ENCODE measurements at regions of chr5 and their contacts with region 1.

Region 1: GRCh38 chr5:34929150-34929719 is at the start of gene DNAJC21:
- DNase-seq: peak; percentile 99
- H3K4me3 Mint-ChIP-seq: peak within 1 kb of the TSS; percentile 94
- H3K27ac Mint-ChIP-seq: peak within 1 kb of the TSS; percentile 94
- H3K4me1 Mint-ChIP-seq: peaks cover 37% of the 10 kb centered on the region
- H3K27me3 Mint-ChIP-seq: no peaks in the 10 kb centered on the region
- total RNA-seq, gene DNAJC21: 59.1 to 62.1 TPM

Region 2: DNA sequence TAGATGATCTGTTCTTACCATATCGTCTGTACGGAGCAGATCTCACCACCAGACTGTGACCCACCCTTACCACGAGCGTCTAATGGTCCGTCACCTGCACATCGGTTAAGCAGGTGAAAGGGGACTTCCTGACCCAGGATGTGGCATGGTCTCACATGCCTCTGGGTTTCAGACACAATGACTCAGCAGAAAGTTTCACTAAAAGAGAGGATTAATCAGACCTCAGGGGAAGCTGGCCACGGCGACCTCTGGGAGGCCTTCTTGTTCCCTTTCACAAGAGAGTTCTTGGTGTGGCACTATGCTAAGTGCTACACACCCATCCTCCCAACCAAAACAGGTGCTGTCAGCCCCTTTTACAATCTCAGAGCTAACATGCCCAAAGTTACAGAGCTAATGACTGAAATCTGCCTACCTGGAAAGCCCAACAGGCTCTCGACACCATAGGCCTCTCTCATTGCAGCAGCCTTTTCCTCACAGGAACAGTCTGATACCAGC is 1079.1 kb before region 1 on chr5:
- CTCF ChIA-PET with region 1: no interaction called
- intact Hi-C with region 1: loop called (anchors 10 kb)
- DNase-seq: peak; percentile 70
- H3K4me3 Mint-ChIP-seq: no peak overlapping the region
- H3K27ac Mint-ChIP-seq: peak overlapping the region; percentile 55
- H3K4me1 Mint-ChIP-seq: peaks cover 8% of the 10 kb centered on the region
- H3K27me3 Mint-ChIP-seq: no peaks in the 10 kb centered on the region

Region 3: GRCh38 chr5:34915139-34915855 is 13.9 kb before region 1 on chr5 and contains the starts of genes BRIX1 and RAD1:
- CTCF ChIA-PET with region 1: interaction called, 11 read pairs
- intact Hi-C with region 1: loop called (anchors 1 kb)
- DNase-seq: peak; percentile 97
- H3K4me3 Mint-ChIP-seq: no peak within 1 kb of the TSS
- H3K27ac Mint-ChIP-seq: peak within 1 kb of the TSS; percentile 52
- H3K4me1 Mint-ChIP-seq: peaks cover 32% of the 10 kb centered on the region
- H3K27me3 Mint-ChIP-seq: no peaks in the 10 kb centered on the region
- total RNA-seq, gene BRIX1: 66.5 to 69.0 TPM
- total RNA-seq, gene RAD1: 38.8 to 40.7 TPM

Region 4: DNA sequence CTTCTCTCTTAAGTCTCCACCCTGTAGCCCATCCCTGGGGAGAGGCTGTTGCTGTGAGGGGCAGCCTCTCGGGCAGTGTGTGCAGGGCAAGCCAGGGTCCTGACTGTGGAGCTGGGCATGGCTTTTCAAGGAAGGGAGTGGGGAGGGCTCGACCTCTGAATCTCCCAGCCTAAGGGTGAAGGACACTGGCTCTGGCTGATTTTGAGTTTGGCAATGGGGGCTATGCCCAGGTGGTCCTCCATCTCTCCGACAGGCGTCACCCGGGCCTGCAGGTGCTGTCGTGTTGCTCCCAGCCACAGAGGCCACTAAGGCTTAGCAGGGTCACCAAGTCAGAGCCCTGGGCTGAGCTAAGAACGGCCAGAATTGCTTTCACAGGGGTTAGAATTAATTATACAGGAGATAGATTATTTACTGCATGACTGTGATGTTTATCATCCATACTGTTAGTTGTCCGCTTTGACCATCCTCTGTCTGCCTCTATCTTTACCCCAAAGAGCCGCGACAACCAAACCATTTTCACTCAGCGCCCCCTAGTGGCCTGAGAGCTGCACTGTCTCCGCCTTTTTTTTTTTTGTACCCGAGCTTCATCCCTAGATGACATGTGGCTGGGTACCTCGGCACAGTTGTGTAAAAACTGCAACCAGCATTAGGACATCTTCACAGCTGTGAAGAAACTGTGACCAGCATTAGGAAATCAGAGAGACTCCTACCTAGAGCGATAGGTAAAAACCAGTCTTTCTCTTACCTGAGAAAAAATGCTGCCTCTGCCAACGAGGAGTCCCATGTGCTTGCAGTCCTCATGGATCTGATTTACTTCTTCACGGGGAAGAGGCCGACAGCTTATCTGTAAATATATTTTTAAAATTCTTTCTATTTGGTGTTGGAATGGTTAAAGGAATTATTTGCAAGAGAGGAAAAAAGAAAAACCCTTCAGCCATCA is 74.1 kb after region 1 on chr5:
- CTCF ChIA-PET with region 1: interaction called, 4 read pairs
- intact Hi-C with region 1: loop called (anchors 1 kb)
- DNase-seq: peak; percentile 76
- H3K4me3 Mint-ChIP-seq: no peak overlapping the region
- H3K27ac Mint-ChIP-seq: no peak overlapping the region
- H3K4me1 Mint-ChIP-seq: no peaks in the 10 kb centered on the region
- H3K27me3 Mint-ChIP-seq: peaks cover 16% of the 10 kb centered on the region

Region 5: DNA sequence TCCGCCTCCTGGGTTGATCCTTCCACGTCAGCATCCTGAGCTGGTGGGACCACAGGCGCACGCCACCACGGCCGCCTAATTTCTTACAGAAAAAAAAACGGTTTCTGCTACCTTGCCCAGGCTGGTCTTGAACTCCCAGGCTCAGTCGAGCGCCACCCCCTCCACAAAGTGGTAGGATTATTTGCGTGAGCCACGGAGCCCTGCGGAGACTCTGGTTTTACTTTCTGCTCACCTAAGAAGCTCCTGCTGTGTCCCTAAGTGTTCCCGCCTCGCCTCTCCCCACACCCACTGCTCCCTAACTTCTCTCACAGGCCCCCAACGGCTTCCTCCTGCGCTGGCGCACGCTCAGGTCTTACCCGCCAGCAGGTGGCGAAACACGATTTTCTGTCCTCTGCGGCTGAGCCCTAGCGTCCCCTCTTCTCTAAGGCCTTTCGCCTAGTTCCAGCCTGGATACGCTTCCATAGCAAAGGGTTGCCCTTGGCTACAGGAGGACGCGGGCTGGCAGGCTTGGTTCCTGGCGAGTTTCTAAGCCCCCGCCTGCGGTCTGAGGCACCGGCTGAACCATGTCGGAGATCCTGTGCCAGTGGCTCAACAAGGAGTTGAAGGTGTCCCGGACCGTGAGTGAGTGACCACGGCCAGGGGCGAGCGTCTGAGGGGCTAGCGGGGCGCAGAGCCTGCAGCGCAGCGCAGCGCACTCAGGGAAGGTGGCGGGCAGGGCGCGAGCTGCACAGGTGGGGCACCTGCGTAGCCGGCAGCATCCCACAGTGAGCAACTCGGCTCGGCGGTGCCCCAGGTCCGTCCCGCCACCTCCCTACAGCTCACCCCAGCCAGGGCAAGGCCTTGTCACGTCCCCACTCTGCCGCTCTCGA is 688.4 kb after region 1 on chr5 and contains the start of gene SPEF2:
- CTCF ChIA-PET with region 1: no interaction called
- intact Hi-C with region 1: loop called (anchors 5 kb)
- DNase-seq: peak; percentile 86
- H3K4me3 Mint-ChIP-seq: peak within 1 kb of the TSS; percentile 90
- H3K27ac Mint-ChIP-seq: peak within 1 kb of the TSS; percentile 88
- H3K4me1 Mint-ChIP-seq: peaks cover 16% of the 10 kb centered on the region
- H3K27me3 Mint-ChIP-seq: no peaks in the 10 kb centered on the region
- total RNA-seq, gene SPEF2: 6.5 to 6.6 TPM

Region 6: GRCh38 chr5:36151434-36152323 is 1222.4 kb after region 1 on chr5 and contains the starts of genes LMBRD2 and SKP2:
- CTCF ChIA-PET with region 1: no interaction called
- intact Hi-C with region 1: loop called (anchors 5 kb)
- DNase-seq: peak; percentile 98
- H3K4me3 Mint-ChIP-seq: peak within 1 kb of the TSS; percentile 96
- H3K27ac Mint-ChIP-seq: peak within 1 kb of the TSS; percentile 76
- H3K4me1 Mint-ChIP-seq: peaks cover 67% of the 10 kb centered on the region
- H3K27me3 Mint-ChIP-seq: no peaks in the 10 kb centered on the region
- total RNA-seq, gene LMBRD2: 7.6 to 8.0 TPM
- total RNA-seq, gene SKP2: 44.4 to 48.1 TPM